Natural killer cell (primary cell): ENCODE measurements at regions of chr4 and their contacts with region 1.

Region 1: GRCh38 chr4:101730291-101731117 is 60.0 kb upstream of the BANK1 start:
- DNase-seq: peak; percentile 18 to 70
- ATAC-seq: peak; percentile 68 to 78 (median 72)
- H3K4me3 ChIP-seq: no peak overlapping the region
- H3K4me3 Mint-ChIP-seq: no peak overlapping the region
- H3K27ac ChIP-seq: no peak overlapping the region
- H3K27ac Mint-ChIP-seq: no peak overlapping the region
- H3K4me1 ChIP-seq: no peaks in the 10 kb centered on the region
- H3K4me1 Mint-ChIP-seq: no peaks in the 10 kb centered on the region
- H3K27me3 ChIP-seq: no peaks in the 10 kb centered on the region
- H3K27me3 Mint-ChIP-seq: peaks cover 0 to 6% of the 10 kb centered on the region in 2 donors
- CTCF ChIP-seq: peak; percentile 67

Region 2: DNA sequence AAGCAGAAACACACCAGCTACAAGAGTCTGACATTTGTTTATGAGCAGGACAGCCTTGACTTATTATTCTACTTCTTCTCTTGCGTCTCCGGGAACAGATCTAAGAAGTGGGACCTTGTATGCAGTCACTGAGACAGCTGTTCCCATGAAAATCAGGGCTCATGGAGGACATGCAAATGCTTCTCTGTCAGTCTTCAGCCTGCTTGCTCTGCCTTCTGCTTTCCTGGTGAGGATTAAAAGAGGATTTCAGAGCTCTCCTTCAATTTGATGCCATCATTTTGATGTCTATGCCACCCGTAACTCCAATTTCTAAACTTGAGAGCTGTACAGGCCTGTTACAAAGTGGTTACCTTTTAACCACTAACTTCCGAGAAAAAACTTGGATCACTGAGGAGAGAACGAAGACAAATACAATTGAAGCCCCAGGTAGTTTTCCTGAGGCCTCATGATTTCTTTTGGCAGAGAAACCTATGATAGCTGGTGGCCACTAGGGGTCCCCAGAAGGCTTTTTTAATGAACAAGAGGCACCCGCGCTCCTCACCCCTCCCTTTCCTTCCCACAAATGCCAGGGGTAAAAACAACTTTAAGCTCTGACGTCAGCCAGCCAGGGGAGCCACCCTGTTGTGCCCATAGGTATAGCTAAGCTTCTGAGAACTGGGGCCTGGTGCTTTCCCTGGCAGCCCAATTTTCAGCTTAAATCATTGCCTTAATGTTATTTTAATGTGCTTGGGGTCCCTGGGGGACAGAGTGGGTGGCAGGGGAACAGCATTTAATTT is 1637.2 kb before region 1 on chr4:
- intact Hi-C with region 1: loop called (anchors 1 kb)
- DNase-seq: peak; percentile 64 to 96
- ATAC-seq: peak; percentile 97 to 98 (median 97)
- H3K4me3 ChIP-seq: no peak overlapping the region
- H3K4me3 Mint-ChIP-seq: no peak overlapping the region
- H3K27ac ChIP-seq: peak overlapping the region; percentile 43
- H3K27ac Mint-ChIP-seq: peak overlapping the region; percentile 64 to 89
- H3K4me1 ChIP-seq: peaks cover 5% of the 10 kb centered on the region
- H3K4me1 Mint-ChIP-seq: peaks cover 18 to 26% of the 10 kb centered on the region in 2 donors
- H3K27me3 ChIP-seq: no peaks in the 10 kb centered on the region
- H3K27me3 Mint-ChIP-seq: peaks cover 0 to 8% of the 10 kb centered on the region in 2 donors
- CTCF ChIP-seq: peak; percentile 88

Region 3: DNA sequence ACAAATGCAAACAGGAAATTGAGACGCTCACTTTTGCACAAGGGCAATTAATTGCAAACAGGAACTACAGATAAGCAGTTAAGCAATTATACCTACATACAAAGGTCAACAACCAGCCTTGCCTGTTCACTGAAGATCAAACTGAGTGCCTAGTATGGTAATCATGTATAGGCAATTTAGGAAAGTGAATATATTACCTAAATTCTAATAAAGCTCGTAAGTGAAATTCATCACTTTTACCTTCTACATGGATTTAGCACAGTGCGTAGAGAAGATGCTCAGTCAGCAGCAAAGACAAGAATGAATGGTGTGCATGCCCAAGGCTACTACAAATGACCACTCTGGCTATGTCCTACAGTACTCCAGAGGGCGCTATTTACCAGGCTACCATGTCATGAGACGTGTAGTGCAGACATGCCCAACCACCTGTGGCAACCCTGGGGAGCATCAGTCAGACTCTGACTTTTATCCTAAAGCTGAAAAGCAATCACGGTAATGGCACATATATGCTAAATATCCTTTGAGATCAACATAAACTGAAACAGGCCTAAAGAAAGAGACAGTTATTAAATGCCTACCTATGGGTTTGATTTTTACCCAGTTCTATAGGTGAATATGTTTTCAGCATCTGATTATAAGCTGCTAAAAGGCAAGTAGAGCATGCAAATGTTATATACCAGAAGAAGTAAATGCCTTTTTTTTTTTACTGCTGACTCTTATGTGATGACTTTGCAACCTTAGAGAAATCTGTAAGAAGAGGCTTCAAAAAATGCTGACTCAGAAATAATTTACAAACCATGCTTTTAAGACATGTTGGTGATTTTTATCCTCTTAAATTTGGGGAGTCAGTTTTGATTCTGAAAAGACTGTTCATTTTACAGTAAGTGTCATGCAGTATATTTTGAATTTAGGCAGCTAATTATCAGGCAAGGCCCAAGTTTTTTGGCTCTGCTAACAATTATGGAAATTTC is 561.2 kb before region 1 on chr4:
- intact Hi-C with region 1: loop called (anchors 1 kb)
- DNase-seq: peak; percentile 30 to 81
- ATAC-seq: peak; percentile 94 to 99 (median 99)
- H3K4me3 ChIP-seq: no peak overlapping the region
- H3K4me3 Mint-ChIP-seq: no peak overlapping the region
- H3K27ac ChIP-seq: no peak overlapping the region
- H3K27ac Mint-ChIP-seq: no peak overlapping the region
- H3K4me1 ChIP-seq: no peaks in the 10 kb centered on the region
- H3K4me1 Mint-ChIP-seq: peaks cover 10 to 11% of the 10 kb centered on the region in 2 donors
- H3K27me3 ChIP-seq: no peaks in the 10 kb centered on the region
- H3K27me3 Mint-ChIP-seq: no peaks in the 10 kb centered on the region
- CTCF ChIP-seq: peak; percentile 81

Region 4: GRCh38 chr4:102157984-102158383 is 427.5 kb after region 1 on chr4:
- intact Hi-C with region 1: no loop called
- DNase-seq: no peak
- ATAC-seq: no peak
- H3K4me3 ChIP-seq: no peak overlapping the region
- H3K4me3 Mint-ChIP-seq: no peak overlapping the region
- H3K27ac ChIP-seq: no peak overlapping the region
- H3K27ac Mint-ChIP-seq: no peak overlapping the region
- H3K4me1 ChIP-seq: no peaks in the 10 kb centered on the region
- H3K4me1 Mint-ChIP-seq: peaks cover 0 to 4% of the 10 kb centered on the region in 2 donors
- H3K27me3 ChIP-seq: no peaks in the 10 kb centered on the region
- H3K27me3 Mint-ChIP-seq: no peaks in the 10 kb centered on the region
- CTCF ChIP-seq: no peak